Activated B cell treated with CpG ODN at 0.5 μM for 24 hours (primary cell): ENCODE measurements at regions of chr2 and their contacts with region 1.

Region 1: DNA sequence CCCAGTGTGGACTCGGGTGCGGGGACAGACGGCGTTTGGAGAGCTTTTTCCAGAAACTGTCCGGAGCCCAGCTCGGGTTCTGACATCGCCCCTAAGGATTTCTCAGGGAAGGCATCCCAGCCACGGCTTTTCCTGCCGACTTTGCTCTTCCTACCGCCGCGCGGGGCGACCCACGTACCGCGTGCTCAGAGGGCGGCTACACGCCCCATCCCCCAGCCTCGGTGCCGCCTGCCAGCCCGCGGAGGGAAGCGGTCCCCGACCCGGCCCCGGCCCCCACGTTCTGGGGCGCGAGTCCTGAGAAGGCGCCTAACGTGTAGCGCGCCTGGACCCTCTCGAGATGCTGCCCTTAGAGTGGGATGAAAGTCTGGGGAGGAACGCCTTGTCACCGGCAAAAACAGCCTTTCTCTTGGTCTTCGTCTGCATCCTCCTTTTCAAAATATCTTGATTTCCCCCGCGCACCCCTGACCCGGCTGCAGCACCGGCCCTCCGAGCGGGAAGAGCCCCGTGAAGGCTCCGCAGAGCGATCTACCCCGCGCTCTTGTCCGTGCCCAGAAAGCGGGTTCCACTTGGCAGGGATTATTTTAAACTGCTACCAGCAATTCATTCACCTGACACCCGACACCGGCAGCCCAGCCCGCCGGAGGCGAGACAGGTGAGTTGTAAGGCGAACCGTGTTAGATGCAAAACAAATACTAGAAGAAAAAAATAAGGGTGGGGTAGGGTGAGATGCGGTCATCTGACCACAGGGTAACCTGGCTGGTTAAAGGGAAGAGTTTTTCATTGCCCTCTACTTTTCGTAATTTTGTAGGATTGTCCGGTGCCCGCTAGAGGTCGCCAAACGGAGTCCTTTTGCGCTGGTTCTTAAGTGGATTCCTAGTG is 812 bp upstream of the KCNG3 start:
- DNase-seq: peak; percentile 47
- ATAC-seq: peak; percentile 66
- H3K4me3 Mint-ChIP-seq: peak overlapping the region; percentile 92
- H3K27ac Mint-ChIP-seq: peak overlapping the region; percentile 59
- H3K4me1 Mint-ChIP-seq: peaks cover 8% of the 10 kb centered on the region
- H3K27me3 Mint-ChIP-seq: peaks cover 22% of the 10 kb centered on the region
- CTCF ChIP-seq: no peak

Region 2: DNA sequence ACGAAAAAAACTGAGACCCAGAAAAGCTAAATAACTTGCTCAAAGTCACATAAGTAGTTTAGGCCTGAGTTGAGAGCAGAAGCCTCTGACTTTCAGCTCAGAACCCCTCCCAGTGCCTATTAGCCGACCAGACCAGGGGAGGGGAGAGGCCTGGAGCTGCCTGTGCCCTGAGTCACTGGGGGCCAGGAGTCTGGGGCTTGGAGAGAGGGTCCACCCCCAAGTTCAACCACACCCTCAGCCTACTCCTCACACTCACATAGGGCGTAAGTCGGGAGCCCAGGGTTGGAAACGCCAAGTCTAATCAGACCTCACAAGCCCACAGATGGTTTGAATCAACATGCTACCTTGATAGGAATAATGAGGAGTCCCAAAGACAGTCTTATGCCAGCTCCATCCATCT is 459.4 kb before region 1 on chr2:
- CTCF ChIA-PET with region 1: no interaction called
- POLR2A ChIA-PET with region 1: no interaction called
- intact Hi-C with region 1: no loop called
- DNase-seq: no peak
- ATAC-seq: no peak
- H3K4me3 Mint-ChIP-seq: no peak overlapping the region
- H3K27ac Mint-ChIP-seq: no peak overlapping the region
- H3K4me1 Mint-ChIP-seq: no peaks in the 10 kb centered on the region
- H3K27me3 Mint-ChIP-seq: peaks cover 8% of the 10 kb centered on the region
- CTCF ChIP-seq: no peak

Region 3: GRCh38 chr2:42095923-42096408 is 398.6 kb before region 1 on chr2:
- CTCF ChIA-PET with region 1: no interaction called
- POLR2A ChIA-PET with region 1: no interaction called
- intact Hi-C with region 1: loop called (anchors 5 kb)
- DNase-seq: peak; percentile 45
- ATAC-seq: peak; percentile 30
- H3K4me3 Mint-ChIP-seq: no peak overlapping the region
- H3K27ac Mint-ChIP-seq: no peak overlapping the region
- H3K4me1 Mint-ChIP-seq: peaks cover 49% of the 10 kb centered on the region
- H3K27me3 Mint-ChIP-seq: no peaks in the 10 kb centered on the region
- CTCF ChIP-seq: peak; percentile 31

Region 4: GRCh38 chr2:42568401-42569115 is 74.0 kb after region 1 on chr2 and contains the start of gene MTA3:
- CTCF ChIA-PET with region 1: no interaction called
- POLR2A ChIA-PET with region 1: no interaction called
- intact Hi-C with region 1: loop called (anchors 2 kb)
- DNase-seq: peak; percentile 62
- ATAC-seq: peak; percentile 69
- H3K4me3 Mint-ChIP-seq: peak within 1 kb of the TSS; percentile 87
- H3K27ac Mint-ChIP-seq: peak within 1 kb of the TSS; percentile 70
- H3K4me1 Mint-ChIP-seq: peaks cover 30% of the 10 kb centered on the region
- H3K27me3 Mint-ChIP-seq: no peaks in the 10 kb centered on the region
- CTCF ChIP-seq: no peak
- total RNA-seq, gene MTA3: 26.2 and 26.8 TPM in 2 replicates

Region 5: GRCh38 chr2:42598656-42599055 is 104.1 kb after region 1 on chr2:
- CTCF ChIA-PET with region 1: no interaction called
- POLR2A ChIA-PET with region 1: no interaction called
- intact Hi-C with region 1: loop called (anchors 10 kb)
- DNase-seq: no peak
- ATAC-seq: no peak
- H3K4me3 Mint-ChIP-seq: no peak overlapping the region
- H3K27ac Mint-ChIP-seq: no peak overlapping the region
- H3K4me1 Mint-ChIP-seq: peaks cover 30% of the 10 kb centered on the region
- H3K27me3 Mint-ChIP-seq: no peaks in the 10 kb centered on the region
- CTCF ChIP-seq: no peak

Region 6: DNA sequence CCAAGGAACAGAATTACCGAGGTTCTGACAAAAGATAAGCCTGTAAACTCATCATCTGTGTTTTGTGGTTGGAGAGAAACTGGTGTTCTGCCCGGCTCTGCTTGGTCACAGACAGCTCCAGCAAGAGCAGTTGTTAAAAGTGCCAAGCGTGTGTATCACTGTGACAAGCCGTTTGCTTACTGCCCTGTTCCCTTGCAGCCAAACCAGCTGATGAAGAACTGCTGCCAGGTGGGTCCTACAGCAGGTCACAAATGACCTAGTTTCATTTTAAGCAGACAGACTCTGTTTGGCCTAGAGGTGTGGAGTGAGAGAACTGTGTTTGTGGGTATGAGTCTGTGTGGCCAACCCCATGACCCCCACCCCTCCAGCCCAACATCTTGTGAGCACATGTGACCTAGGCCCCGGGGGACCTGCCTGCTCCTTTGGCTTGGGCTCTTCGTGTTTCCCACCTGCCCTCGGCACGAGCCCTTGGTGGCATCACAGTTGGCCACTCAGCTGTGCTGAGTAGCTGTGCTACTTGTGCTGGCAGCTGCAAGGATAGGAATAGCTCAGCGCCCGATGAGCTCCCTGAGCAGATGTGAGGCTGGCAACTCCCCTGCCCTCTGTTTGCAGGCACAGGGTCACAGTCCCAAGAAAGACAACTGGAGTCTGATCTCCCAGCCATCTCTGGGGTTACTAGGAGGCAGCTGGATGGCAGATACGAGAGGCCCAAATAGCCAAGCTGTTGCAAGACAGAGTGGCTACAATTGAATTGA is 259.6 kb after region 1 on chr2:
- CTCF ChIA-PET with region 1: no interaction called
- POLR2A ChIA-PET with region 1: interaction called, 4 read pairs
- intact Hi-C with region 1: loop called (anchors 2 kb)
- DNase-seq: peak; percentile 49
- ATAC-seq: peak; percentile 72
- H3K4me3 Mint-ChIP-seq: peak overlapping the region; percentile 39
- H3K27ac Mint-ChIP-seq: peak overlapping the region; percentile 75
- H3K4me1 Mint-ChIP-seq: peaks cover 47% of the 10 kb centered on the region
- H3K27me3 Mint-ChIP-seq: no peaks in the 10 kb centered on the region
- CTCF ChIP-seq: no peak

Region 7: GRCh38 chr2:42792583-42793333 is 298.2 kb after region 1 on chr2 and contains the start of gene HAAO:
- CTCF ChIA-PET with region 1: no interaction called
- POLR2A ChIA-PET with region 1: no interaction called
- intact Hi-C with region 1: loop called (anchors 2 kb)
- DNase-seq: peak; percentile 59
- ATAC-seq: peak; percentile 59
- H3K4me3 Mint-ChIP-seq: peak within 1 kb of the TSS; percentile 92
- H3K27ac Mint-ChIP-seq: peak within 1 kb of the TSS; percentile 93
- H3K4me1 Mint-ChIP-seq: peaks cover 47% of the 10 kb centered on the region
- H3K27me3 Mint-ChIP-seq: no peaks in the 10 kb centered on the region
- CTCF ChIP-seq: no peak
- total RNA-seq, gene HAAO: 11.4 TPM in 2 replicates